ENCODE measurements at regions of chr3 and their contacts with region 1.

Region 1: DNA sequence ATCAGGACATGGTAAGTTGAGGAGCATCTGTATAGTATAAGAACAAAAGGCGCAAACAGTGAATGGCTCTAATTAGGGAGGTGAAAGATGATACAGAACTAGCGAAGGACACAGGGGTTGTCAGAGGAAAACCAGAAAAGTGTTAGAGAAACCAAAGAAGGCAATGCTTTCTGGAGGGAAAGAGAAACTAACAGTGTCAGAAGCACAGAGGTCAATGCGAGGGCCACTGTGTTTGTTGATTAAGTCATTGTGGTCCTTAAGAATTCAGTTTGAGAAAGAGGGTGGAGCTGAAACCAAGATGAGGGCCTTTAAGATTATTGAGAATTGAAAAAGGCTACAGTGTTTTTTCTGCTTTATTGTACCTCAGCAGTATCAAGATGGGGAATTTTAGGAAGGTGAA is 28.8 kb downstream of the ATG7 start:
- DNase-seq: no peak
- H3K4me3 Mint-ChIP-seq: no peak overlapping the region
- H3K27ac Mint-ChIP-seq: peak overlapping the region; percentile 62
- H3K4me1 Mint-ChIP-seq: peaks cover 33% of the 10 kb centered on the region
- H3K27me3 Mint-ChIP-seq: no peaks in the 10 kb centered on the region

Region 2: GRCh38 chr3:11367143-11367693 is 66.2 kb after region 1 on chr3:
- intact Hi-C with region 1: loop called (anchors 5 kb)
- DNase-seq: no peak
- H3K4me3 Mint-ChIP-seq: no peak overlapping the region
- H3K27ac Mint-ChIP-seq: no peak overlapping the region
- H3K4me1 Mint-ChIP-seq: peaks cover 31% of the 10 kb centered on the region
- H3K27me3 Mint-ChIP-seq: no peaks in the 10 kb centered on the region

Region 3: GRCh38 chr3:11530153-11530721 is 229.3 kb after region 1 on chr3:
- intact Hi-C with region 1: no loop called
- DNase-seq: no peak
- H3K4me3 Mint-ChIP-seq: no peak overlapping the region
- H3K27ac Mint-ChIP-seq: no peak overlapping the region
- H3K4me1 Mint-ChIP-seq: no peaks in the 10 kb centered on the region
- H3K27me3 Mint-ChIP-seq: no peaks in the 10 kb centered on the region